Calu3 (cell line): ENCODE measurements at regions of chr3 and their contacts with region 1.

Region 1: GRCh38 chr3:116423945-116424344 is 21.3 kb downstream of the LSAMP start:
- DNase-seq: no peak
- H3K4me3 Mint-ChIP-seq: peak overlapping the region; percentile 44
- H3K27ac Mint-ChIP-seq: peak overlapping the region; percentile 93
- H3K4me1 Mint-ChIP-seq: peaks cover 31% of the 10 kb centered on the region
- H3K27me3 Mint-ChIP-seq: no peaks in the 10 kb centered on the region
- CTCF ChIP-seq: no peak

Region 2: GRCh38 chr3:116216761-116217160 is 207.2 kb before region 1 on chr3:
- CTCF ChIA-PET with region 1: no interaction called
- intact Hi-C with region 1: no loop called
- DNase-seq: no peak
- H3K4me3 Mint-ChIP-seq: no peak overlapping the region
- H3K27ac Mint-ChIP-seq: no peak overlapping the region
- H3K4me1 Mint-ChIP-seq: no peaks in the 10 kb centered on the region
- H3K27me3 Mint-ChIP-seq: no peaks in the 10 kb centered on the region
- CTCF ChIP-seq: no peak

Region 3: GRCh38 chr3:116388867-116389385 is 35.0 kb before region 1 on chr3:
- CTCF ChIA-PET with region 1: no interaction called
- intact Hi-C with region 1: no loop called
- DNase-seq: no peak
- H3K4me3 Mint-ChIP-seq: no peak overlapping the region
- H3K27ac Mint-ChIP-seq: no peak overlapping the region
- H3K4me1 Mint-ChIP-seq: no peaks in the 10 kb centered on the region
- H3K27me3 Mint-ChIP-seq: no peaks in the 10 kb centered on the region
- CTCF ChIP-seq: no peak

Region 4: GRCh38 chr3:116443191-116443661 is 19.3 kb after region 1 on chr3:
- CTCF ChIA-PET with region 1: interaction called, 3 read pairs
- intact Hi-C with region 1: loop called (anchors 2 kb)
- DNase-seq: no peak
- H3K4me3 Mint-ChIP-seq: peak overlapping the region; percentile 85
- H3K27ac Mint-ChIP-seq: peak overlapping the region; percentile 76
- H3K4me1 Mint-ChIP-seq: peaks cover 50% of the 10 kb centered on the region
- H3K27me3 Mint-ChIP-seq: no peaks in the 10 kb centered on the region
- CTCF ChIP-seq: no peak

Region 5: GRCh38 chr3:116464276-116464798 is 40.4 kb after region 1 on chr3:
- CTCF ChIA-PET with region 1: no interaction called
- intact Hi-C with region 1: no loop called
- DNase-seq: no peak
- H3K4me3 Mint-ChIP-seq: no peak overlapping the region
- H3K27ac Mint-ChIP-seq: no peak overlapping the region
- H3K4me1 Mint-ChIP-seq: no peaks in the 10 kb centered on the region
- H3K27me3 Mint-ChIP-seq: no peaks in the 10 kb centered on the region
- CTCF ChIP-seq: no peak

Region 6: DNA sequence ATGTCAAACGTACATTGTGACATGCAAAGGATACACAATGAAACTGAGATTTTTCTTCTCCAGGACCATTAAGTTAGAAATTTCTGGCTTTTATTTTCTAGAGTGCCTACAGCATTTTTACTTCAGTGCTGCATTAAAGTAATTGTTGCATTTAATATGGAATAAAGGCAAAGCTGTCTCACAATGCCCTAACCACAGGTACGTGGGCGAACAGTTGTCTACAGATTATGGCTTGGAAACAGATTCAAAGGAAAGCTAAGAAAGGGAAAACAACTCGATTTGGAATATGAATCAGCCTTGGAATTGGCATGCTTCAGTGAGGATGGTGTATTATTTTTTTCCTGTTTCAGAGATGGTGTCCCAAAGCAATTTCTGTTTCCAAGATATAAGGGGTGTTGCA is 206.5 kb after region 1 on chr3:
- CTCF ChIA-PET with region 1: no interaction called
- intact Hi-C with region 1: no loop called
- DNase-seq: no peak
- H3K4me3 Mint-ChIP-seq: no peak overlapping the region
- H3K27ac Mint-ChIP-seq: no peak overlapping the region
- H3K4me1 Mint-ChIP-seq: no peaks in the 10 kb centered on the region
- H3K27me3 Mint-ChIP-seq: peaks cover 56% of the 10 kb centered on the region
- CTCF ChIP-seq: no peak